HepG2 (cell line): ENCODE measurements at regions of chr5 and their contacts with region 1.

Region 1: GRCh38 chr5:57137401-57137800 is 36.5 kb upstream of the GPBP1 start:
- DNase-seq: no peak
- ATAC-seq: no peak
- H3K4me3 ChIP-seq: no peak overlapping the region
- H3K27ac ChIP-seq: no peak overlapping the region
- H3K4me1 ChIP-seq: peaks cover 30% of the 10 kb centered on the region
- H3K27me3 ChIP-seq: no peaks in the 10 kb centered on the region
- CTCF ChIP-seq: no peak
- EP300 ChIP-seq: no peak
- POLR2A ChIP-seq: no peak
- RAD21 ChIP-seq: no peak

Region 2: GRCh38 chr5:56900858-56901578 is 236.4 kb before region 1 on chr5:
- CTCF ChIA-PET with region 1: interaction called, 22 read pairs
- POLR2A ChIA-PET with region 1: no interaction called
- in situ Hi-C with region 1: loop called (anchors 5 kb)
- intact Hi-C with region 1: loop called (anchors 1 kb)
- DNase-seq: peak; percentile 56
- ATAC-seq: peak; percentile 83
- H3K4me3 ChIP-seq: no peak overlapping the region
- H3K27ac ChIP-seq: no peak overlapping the region
- H3K4me1 ChIP-seq: no peaks in the 10 kb centered on the region; the same call in 1 of the 2 replicates
- H3K27me3 ChIP-seq: no peaks in the 10 kb centered on the region
- CTCF ChIP-seq: peak; percentile 79
- EP300 ChIP-seq: no peak
- POLR2A ChIP-seq: no peak
- RAD21 ChIP-seq: peak; percentile 77

Region 3: GRCh38 chr5:56995596-56995995 is 141.8 kb before region 1 on chr5:
- CTCF ChIA-PET with region 1: interaction called, 6 read pairs
- POLR2A ChIA-PET with region 1: no interaction called
- in situ Hi-C with region 1: no loop called
- intact Hi-C with region 1: loop called (anchors 5 kb)
- DNase-seq: no peak
- ATAC-seq: no peak
- H3K4me3 ChIP-seq: no peak overlapping the region
- H3K27ac ChIP-seq: no peak overlapping the region
- H3K4me1 ChIP-seq: no peaks in the 10 kb centered on the region
- H3K27me3 ChIP-seq: no peaks in the 10 kb centered on the region
- CTCF ChIP-seq: no peak
- EP300 ChIP-seq: no peak
- POLR2A ChIP-seq: no peak
- RAD21 ChIP-seq: no peak

Region 4: GRCh38 chr5:57102905-57103255 is 34.5 kb before region 1 on chr5:
- CTCF ChIA-PET with region 1: no interaction called
- POLR2A ChIA-PET with region 1: interaction called, 8 read pairs
- in situ Hi-C with region 1: no loop called
- intact Hi-C with region 1: loop called (anchors 5 kb)
- DNase-seq: peak; percentile 95
- ATAC-seq: peak; percentile 94
- H3K4me3 ChIP-seq: peak overlapping the region; percentile 38 to 65 (median 55); a peak in 4 of 6 replicates
- H3K27ac ChIP-seq: peak overlapping the region; percentile 100
- H3K4me1 ChIP-seq: peaks cover 58% of the 10 kb centered on the region
- H3K27me3 ChIP-seq: no peaks in the 10 kb centered on the region
- CTCF ChIP-seq: no peak
- EP300 ChIP-seq: peak; percentile 56 to 90; a peak in 2 of 4 replicates
- POLR2A ChIP-seq: 0 out of 4 replicates have a peak, but pooled peaks of 1 of the 2 experiments have one; percentile 46
- RAD21 ChIP-seq: no peak

Region 5: DNA sequence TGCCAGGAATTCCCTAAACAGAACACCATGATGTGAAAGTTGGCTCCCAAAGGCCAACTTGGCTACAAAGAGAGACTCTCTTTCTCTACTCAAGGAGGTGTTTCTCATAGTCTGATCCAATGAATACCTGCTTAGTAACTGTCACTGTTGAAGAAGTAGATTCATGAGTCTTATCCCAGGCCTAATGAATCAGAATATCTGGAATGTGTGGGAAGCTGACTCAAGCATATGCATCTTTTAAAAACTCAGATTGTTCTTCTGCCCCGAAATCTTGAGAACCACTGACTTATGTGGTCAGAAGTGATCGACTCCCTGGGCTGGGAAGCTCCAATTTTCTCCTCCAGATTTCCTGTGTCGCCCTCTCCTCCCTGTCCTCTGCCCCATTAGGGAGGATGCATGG is 976.9 kb after region 1 on chr5:
- CTCF ChIA-PET with region 1: no interaction called
- POLR2A ChIA-PET with region 1: no interaction called
- in situ Hi-C with region 1: no loop called
- intact Hi-C with region 1: no loop called
- DNase-seq: no peak
- ATAC-seq: no peak
- H3K4me3 ChIP-seq: no peak overlapping the region
- H3K27ac ChIP-seq: no peak overlapping the region
- H3K4me1 ChIP-seq: 0 out of 2 replicates have a peak, but pooled peaks cover 7% of the 10 kb centered on the region
- H3K27me3 ChIP-seq: no peaks in the 10 kb centered on the region; a peak in 1 of 5 replicates
- CTCF ChIP-seq: no peak
- EP300 ChIP-seq: no peak
- POLR2A ChIP-seq: no peak
- RAD21 ChIP-seq: no peak